Transverse colon (tissue), 4 donors: ENCODE measurements at regions of chr3 and their contacts with region 1.

Region 1: GRCh38 chr3:98593046-98593936 is at the start of gene CPOX:
- DNase-seq: peak; percentile 93
- H3K4me3 ChIP-seq: peak within 1 kb of the TSS; percentile 79 to 92 (median 86)
- H3K27ac ChIP-seq: peak within 1 kb of the TSS; percentile 84 to 93 (median 87)
- H3K4me1 ChIP-seq: peaks cover 8 to 29% (median 19%) of the 10 kb centered on the region in 4 donors
- H3K27me3 ChIP-seq: no peaks in the 10 kb centered on the region
- CTCF ChIP-seq: no peak
- EP300 ChIP-seq: no peak
- POLR2A ChIP-seq: peak; percentile 40
- total RNA-seq, gene CPOX: 17.9 to 30.7 (median 26.3) TPM

Region 2: DNA sequence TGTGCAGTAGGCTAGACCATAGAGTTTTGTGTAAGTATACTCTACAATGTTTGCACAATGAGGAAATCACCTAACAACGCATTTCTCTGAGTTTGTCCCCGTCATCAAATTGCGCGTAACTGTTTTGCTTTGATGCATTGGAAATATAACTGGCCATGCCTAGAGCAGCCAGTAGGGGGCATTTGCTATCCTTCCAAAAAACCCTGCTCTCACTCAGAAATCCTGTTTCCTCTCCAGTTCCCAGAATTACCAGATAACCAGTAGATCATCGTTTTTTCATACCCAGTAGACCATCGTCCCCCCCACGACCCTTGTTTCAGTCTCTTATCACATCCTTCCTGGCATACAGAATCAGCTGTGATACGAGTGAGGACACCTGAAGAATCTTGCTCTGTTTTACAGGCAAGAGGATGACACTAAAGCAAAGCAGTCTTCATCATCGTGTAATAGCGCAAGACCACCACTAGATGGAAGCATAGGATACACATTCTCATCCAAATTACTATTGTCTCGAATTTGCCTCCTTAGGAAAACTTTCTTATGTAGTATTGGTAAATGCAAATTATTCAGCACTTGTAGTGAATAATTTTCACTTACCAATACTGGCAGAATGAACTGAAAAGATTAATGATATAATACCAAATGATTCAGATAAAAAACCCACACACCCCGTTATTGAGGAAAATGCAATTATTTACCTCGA is 553.8 kb before region 1 on chr3:
- in situ Hi-C with region 1: loop called in 1 of 4 experiments (anchors 25 kb)
- intact Hi-C with region 1: no loop called
- DNase-seq: peak; percentile 44
- H3K4me3 ChIP-seq: peak overlapping the region in 2 of 4 donors; percentile 14 to 27
- H3K27ac ChIP-seq: peak overlapping the region in 1 of 4 donors; percentile 27
- H3K4me1 ChIP-seq: no peaks in the 10 kb centered on the region
- H3K27me3 ChIP-seq: peaks cover 21% of the 10 kb centered on the region
- CTCF ChIP-seq: peak; percentile 78 to 91 (median 89)
- EP300 ChIP-seq: no peak
- POLR2A ChIP-seq: no peak

Region 3: GRCh38 chr3:98329392-98330124 is 263.7 kb before region 1 on chr3:
- in situ Hi-C with region 1: loop called in 2 of 4 experiments (anchors 25 kb)
- intact Hi-C with region 1: no loop called
- DNase-seq: peak; percentile 15
- H3K4me3 ChIP-seq: no peak overlapping the region
- H3K27ac ChIP-seq: no peak overlapping the region
- H3K4me1 ChIP-seq: no peaks in the 10 kb centered on the region
- H3K27me3 ChIP-seq: no peaks in the 10 kb centered on the region
- CTCF ChIP-seq: peak; percentile 45 to 61 (median 50)
- EP300 ChIP-seq: no peak
- POLR2A ChIP-seq: no peak

Region 4: GRCh38 chr3:98388147-98388546 is 205.1 kb before region 1 on chr3:
- in situ Hi-C with region 1: no loop called
- intact Hi-C with region 1: no loop called
- DNase-seq: no peak
- H3K4me3 ChIP-seq: no peak overlapping the region
- H3K27ac ChIP-seq: no peak overlapping the region
- H3K4me1 ChIP-seq: no peaks in the 10 kb centered on the region
- H3K27me3 ChIP-seq: no peaks in the 10 kb centered on the region
- CTCF ChIP-seq: no peak
- EP300 ChIP-seq: no peak
- POLR2A ChIP-seq: no peak

Region 5: GRCh38 chr3:98432575-98432974 is 160.7 kb before region 1 on chr3:
- in situ Hi-C with region 1: no loop called
- intact Hi-C with region 1: no loop called
- DNase-seq: no peak
- H3K4me3 ChIP-seq: no peak overlapping the region
- H3K27ac ChIP-seq: no peak overlapping the region
- H3K4me1 ChIP-seq: no peaks in the 10 kb centered on the region
- H3K27me3 ChIP-seq: no peaks in the 10 kb centered on the region
- CTCF ChIP-seq: no peak
- EP300 ChIP-seq: no peak
- POLR2A ChIP-seq: no peak

Region 6: DNA sequence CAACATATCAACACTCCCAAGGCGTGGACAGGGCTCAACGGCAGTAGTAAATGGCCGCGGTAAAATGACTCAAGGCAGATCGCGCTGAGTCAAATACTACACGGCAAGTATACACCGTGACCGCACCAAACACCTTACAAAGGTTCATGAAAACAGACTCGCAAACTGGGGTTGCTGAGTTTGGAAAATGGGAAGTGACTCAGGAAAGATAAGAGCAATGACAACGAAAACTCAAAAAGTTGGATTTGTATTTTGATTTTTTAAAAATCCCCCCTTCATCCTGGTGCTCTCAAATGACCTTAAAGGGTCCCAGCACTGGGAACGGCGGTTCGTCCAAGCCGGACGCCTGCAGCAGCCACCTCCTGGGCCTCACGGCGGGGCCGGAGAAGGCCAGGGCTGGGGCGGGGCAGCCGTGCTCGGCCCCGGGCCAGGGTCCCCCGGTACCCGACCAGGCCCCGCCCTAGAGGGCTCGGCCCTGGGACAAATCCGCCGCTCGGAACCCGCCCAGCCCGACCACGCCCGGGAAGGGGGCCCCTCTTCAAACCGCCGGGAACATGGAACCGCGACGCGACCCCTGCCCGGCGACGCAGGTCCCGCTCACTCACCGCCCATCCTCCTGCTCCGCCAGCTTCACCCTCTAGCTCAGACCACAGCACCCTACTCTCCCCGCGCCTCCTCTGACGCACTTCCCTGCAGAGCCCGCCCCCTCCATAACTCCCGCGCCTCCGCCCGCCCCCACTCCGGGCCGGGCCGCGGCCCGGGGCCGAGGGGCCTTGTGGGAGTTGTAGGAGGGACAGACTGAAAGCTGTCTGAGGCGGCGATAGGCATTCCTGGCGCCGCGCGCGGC is 70.8 kb before region 1 on chr3 and contains the start of gene CLDND1:
- in situ Hi-C with region 1: loop called in 1 of 4 experiments (anchors 10 kb)
- intact Hi-C with region 1: loop called (anchors 5 kb)
- DNase-seq: peak; percentile 98
- H3K4me3 ChIP-seq: peak within 1 kb of the TSS; percentile 56 to 93 (median 89)
- H3K27ac ChIP-seq: peak within 1 kb of the TSS; percentile 93 to 98 (median 96)
- H3K4me1 ChIP-seq: peaks cover 9 to 15% (median 12%) of the 10 kb centered on the region in 4 donors
- H3K27me3 ChIP-seq: no peaks in the 10 kb centered on the region
- CTCF ChIP-seq: no peak
- EP300 ChIP-seq: no peak
- POLR2A ChIP-seq: peak; percentile 94
- total RNA-seq, gene CLDND1: 105 to 202 (median 162) TPM

Region 7: GRCh38 chr3:98711426-98711825 is 118.1 kb after region 1 on chr3:
- in situ Hi-C with region 1: no loop called
- intact Hi-C with region 1: no loop called
- DNase-seq: no peak
- H3K4me3 ChIP-seq: no peak overlapping the region
- H3K27ac ChIP-seq: no peak overlapping the region
- H3K4me1 ChIP-seq: no peaks in the 10 kb centered on the region
- H3K27me3 ChIP-seq: no peaks in the 10 kb centered on the region
- CTCF ChIP-seq: no peak
- EP300 ChIP-seq: no peak
- POLR2A ChIP-seq: no peak

Region 8: DNA sequence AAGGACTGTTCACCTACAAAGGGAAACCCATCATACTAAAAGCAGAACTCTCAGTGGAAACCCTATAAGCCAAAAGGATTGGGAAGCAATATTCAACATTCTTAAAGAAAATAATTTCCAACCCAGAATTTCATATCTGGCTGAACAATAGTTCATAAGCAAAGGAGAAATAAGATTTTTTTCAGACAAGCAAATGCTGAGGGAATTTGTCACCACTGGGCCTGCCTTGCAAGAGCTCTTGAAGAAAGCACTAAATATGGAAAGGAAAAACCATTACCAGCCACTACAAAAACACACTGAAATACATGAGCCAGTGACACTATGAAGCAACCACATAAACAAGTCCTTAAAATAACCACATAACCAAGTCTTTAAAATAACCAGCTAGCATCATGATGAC is 337.1 kb after region 1 on chr3:
- in situ Hi-C with region 1: no loop called
- intact Hi-C with region 1: no loop called
- DNase-seq: no peak
- H3K4me3 ChIP-seq: no peak overlapping the region
- H3K27ac ChIP-seq: no peak overlapping the region
- H3K4me1 ChIP-seq: no peaks in the 10 kb centered on the region
- H3K27me3 ChIP-seq: no peaks in the 10 kb centered on the region
- CTCF ChIP-seq: no peak
- EP300 ChIP-seq: no peak
- POLR2A ChIP-seq: no peak